Activated naive CD4-positive, alpha-beta T cell treated with anti-CD3 and anti-CD28 coated beads for 36 hours (primary cell): ENCODE measurements at regions of chr6 and their contacts with region 1.

Region 1: GRCh38 chr6:166402582-166403277 is 20.0 kb upstream of the MPC1 start:
- DNase-seq: no peak
- H3K4me3 Mint-ChIP-seq: no peak overlapping the region
- H3K27ac Mint-ChIP-seq: no peak overlapping the region
- H3K4me1 Mint-ChIP-seq: no peaks in the 10 kb centered on the region
- H3K27me3 Mint-ChIP-seq: no peaks in the 10 kb centered on the region

Region 2: GRCh38 chr6:165884813-165885765 is 517.6 kb before region 1 on chr6:
- CTCF ChIA-PET with region 1: interaction called, 3 read pairs
- intact Hi-C with region 1: loop called (anchors 1 kb)
- DNase-seq: peak; percentile 77
- H3K4me3 Mint-ChIP-seq: no peak overlapping the region
- H3K27ac Mint-ChIP-seq: no peak overlapping the region
- H3K4me1 Mint-ChIP-seq: peaks cover 4% of the 10 kb centered on the region
- H3K27me3 Mint-ChIP-seq: peaks cover 9% of the 10 kb centered on the region

Region 3: DNA sequence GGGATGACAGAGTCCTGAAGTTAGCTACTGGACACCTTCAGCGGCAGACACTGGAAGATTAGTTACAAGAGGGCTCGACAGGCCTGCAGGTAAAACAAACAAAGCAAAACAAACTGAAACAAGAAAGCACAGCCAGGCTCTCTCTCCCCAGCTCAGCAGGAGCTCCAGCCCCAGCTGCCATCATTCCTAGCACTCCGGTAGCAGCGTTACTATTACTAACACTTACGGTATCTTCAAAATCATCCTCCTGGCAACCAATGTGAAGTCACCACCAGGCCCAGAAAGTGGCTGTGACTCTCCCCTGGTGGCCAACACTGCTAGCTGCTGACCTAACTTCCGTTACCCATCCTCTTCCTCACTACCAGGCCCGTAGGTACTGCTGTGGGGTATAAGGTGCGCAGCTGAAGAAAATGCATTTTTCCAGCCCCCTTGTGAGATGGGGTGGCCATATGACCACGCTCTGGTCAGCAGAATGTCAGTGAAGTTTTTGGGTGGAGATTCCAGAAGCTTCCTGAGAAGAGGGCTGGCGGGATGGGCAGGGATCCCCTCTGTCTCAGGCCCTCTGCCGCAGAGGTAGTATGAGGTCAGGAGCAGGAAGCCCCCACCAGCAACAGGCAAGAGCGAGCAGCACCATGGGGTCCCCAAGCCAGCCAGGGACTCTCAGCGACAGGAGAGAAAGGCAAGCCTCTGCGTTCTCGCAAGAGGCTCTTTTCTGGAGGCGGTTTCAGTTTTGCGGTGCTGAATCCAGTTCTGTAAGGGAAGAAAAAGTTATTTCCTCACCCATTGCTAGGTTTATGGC is 197.7 kb before region 1 on chr6:
- CTCF ChIA-PET with region 1: no interaction called
- intact Hi-C with region 1: no loop called
- DNase-seq: no peak
- H3K4me3 Mint-ChIP-seq: no peak overlapping the region
- H3K27ac Mint-ChIP-seq: no peak overlapping the region
- H3K4me1 Mint-ChIP-seq: peaks cover 5% of the 10 kb centered on the region
- H3K27me3 Mint-ChIP-seq: peaks cover 3% of the 10 kb centered on the region

Region 4: GRCh38 chr6:166275714-166276166 is 127.0 kb before region 1 on chr6:
- CTCF ChIA-PET with region 1: interaction called, 60 read pairs
- intact Hi-C with region 1: loop called (anchors 1 kb)
- DNase-seq: peak; percentile 78
- H3K4me3 Mint-ChIP-seq: no peak overlapping the region
- H3K27ac Mint-ChIP-seq: no peak overlapping the region
- H3K4me1 Mint-ChIP-seq: peaks cover 3% of the 10 kb centered on the region
- H3K27me3 Mint-ChIP-seq: no peaks in the 10 kb centered on the region

Region 5: DNA sequence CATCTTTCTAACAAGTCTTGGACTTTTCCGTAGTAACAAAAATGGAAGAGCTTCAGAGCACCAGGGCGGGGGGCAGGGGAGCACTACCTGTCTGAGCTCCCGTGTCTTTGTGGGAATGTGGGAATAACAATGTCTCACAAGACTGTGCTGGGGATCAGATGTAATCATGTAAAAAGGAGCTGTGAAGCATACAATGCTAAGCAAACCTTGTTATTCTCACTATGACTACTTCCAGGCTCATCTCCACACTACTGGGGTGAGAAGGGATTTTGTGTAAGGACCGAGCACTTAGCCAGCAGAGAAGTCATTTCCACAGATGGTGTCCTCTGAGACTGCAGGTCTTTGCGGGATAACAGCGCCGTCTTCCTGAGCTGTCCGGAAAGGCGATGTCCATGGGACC is 121.6 kb before region 1 on chr6:
- CTCF ChIA-PET with region 1: interaction called, 60 read pairs
- intact Hi-C with region 1: no loop called
- DNase-seq: no peak
- H3K4me3 Mint-ChIP-seq: no peak overlapping the region
- H3K27ac Mint-ChIP-seq: no peak overlapping the region
- H3K4me1 Mint-ChIP-seq: no peaks in the 10 kb centered on the region
- H3K27me3 Mint-ChIP-seq: peaks cover 5% of the 10 kb centered on the region

Region 6: GRCh38 chr6:166308033-166308768 is 94.5 kb before region 1 on chr6 and contains the start of gene PRR18:
- CTCF ChIA-PET with region 1: interaction called, 31 read pairs
- intact Hi-C with region 1: loop called (anchors 1 kb)
- DNase-seq: no peak
- H3K4me3 Mint-ChIP-seq: peak within 1 kb of the TSS; percentile 39
- H3K27ac Mint-ChIP-seq: no peak within 1 kb of the TSS
- H3K4me1 Mint-ChIP-seq: peaks cover 4% of the 10 kb centered on the region
- H3K27me3 Mint-ChIP-seq: peaks cover 29% of the 10 kb centered on the region
- total RNA-seq, gene PRR18: not detected

Region 7: DNA sequence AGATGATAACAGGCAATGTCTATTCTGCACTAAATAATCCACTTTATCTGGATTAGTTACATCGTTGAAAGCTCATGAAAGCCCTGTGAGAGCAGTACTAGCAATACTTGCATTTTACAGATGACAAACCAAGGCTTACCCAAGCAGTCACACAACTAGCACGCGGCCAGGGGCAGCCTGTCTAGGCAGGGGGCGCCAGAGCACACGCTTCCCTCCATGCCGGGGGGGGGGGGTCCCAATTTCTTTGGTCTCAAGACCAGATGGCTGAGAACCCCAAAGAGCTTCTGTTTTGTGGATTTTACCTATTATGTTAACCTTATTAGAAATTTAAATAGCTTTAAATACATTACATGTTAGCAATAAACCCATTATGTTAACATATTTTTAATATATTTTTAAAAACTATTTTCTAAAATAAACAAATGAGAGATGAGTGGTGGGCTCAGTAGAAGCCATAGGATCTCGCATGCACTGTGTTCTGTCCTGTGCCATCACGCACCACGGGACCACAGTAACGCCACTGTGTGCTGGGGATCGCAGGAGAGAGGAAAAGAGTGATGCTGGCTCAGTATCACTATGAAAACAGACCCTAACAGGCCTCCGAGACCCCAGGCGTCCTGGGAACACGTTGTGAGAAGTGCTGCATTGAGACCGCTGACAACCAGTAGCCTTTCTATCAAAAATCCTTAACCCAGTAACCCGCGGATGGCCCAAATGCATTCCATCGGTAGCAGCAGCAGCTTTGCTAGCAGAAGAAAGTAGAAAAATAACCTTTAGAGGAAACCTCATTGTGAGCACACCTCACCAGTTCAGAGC is 89.3 kb before region 1 on chr6:
- CTCF ChIA-PET with region 1: interaction called, 31 read pairs
- intact Hi-C with region 1: loop called (anchors 1 kb)
- DNase-seq: peak; percentile 71
- H3K4me3 Mint-ChIP-seq: no peak overlapping the region
- H3K27ac Mint-ChIP-seq: no peak overlapping the region
- H3K4me1 Mint-ChIP-seq: peaks cover 4% of the 10 kb centered on the region
- H3K27me3 Mint-ChIP-seq: peaks cover 16% of the 10 kb centered on the region

Region 8: DNA sequence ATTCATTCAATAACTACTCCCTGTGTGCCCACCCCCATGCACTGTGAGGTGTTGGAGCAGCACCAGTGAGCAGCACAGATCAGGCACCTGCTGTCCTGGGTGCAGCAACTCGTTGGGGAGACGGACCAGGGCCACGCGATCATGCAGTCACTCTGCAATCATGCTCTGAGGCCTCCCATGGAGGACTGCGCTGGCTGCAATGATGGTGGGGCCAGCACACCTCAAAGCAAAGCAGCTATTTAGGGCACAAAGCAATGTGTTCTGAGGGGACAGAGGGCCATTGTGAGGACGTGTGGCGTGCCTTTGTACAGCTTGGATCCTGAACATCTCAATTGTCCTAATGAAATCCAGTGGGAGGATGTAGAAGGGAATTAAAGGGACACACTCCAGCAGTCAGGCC is 21.1 kb after region 1 on chr6:
- CTCF ChIA-PET with region 1: no interaction called
- intact Hi-C with region 1: no loop called
- DNase-seq: no peak
- H3K4me3 Mint-ChIP-seq: no peak overlapping the region
- H3K27ac Mint-ChIP-seq: no peak overlapping the region
- H3K4me1 Mint-ChIP-seq: peaks cover 16% of the 10 kb centered on the region
- H3K27me3 Mint-ChIP-seq: no peaks in the 10 kb centered on the region